ENCODE measurements at regions of chr5 and their contacts with region 1.

Region 1: GRCh38 chr5:108753877-108754276 is 6.2 kb downstream of the FER start:
- DNase-seq: peak; percentile 20
- ATAC-seq: peak; percentile 57
- H3K4me3 Mint-ChIP-seq: no peak overlapping the region
- H3K27ac Mint-ChIP-seq: no peak overlapping the region
- H3K4me1 Mint-ChIP-seq: peaks cover 16% of the 10 kb centered on the region
- H3K27me3 Mint-ChIP-seq: no peaks in the 10 kb centered on the region

Region 2: DNA sequence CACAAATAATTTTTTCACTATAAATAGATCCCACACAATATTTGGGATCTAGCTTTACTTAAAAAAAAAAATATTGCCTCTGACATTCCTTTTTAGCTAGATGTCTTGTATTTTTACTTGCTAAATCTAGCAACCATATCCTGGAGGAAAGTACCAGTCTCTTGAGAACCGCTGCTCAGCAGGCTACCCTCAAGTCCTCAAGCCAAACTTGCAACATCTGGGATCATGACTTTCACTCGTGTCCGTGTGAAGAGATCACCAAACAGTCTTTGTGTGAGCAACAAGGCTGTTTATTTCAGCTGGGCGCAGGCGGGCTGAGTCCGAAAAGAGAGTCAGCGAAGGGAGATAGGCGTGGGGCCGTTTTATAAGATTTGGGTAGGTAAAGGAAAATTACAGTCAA is 186.4 kb before region 1 on chr5:
- CTCF ChIA-PET with region 1: no interaction called
- POLR2A ChIA-PET with region 1: no interaction called
- intact Hi-C with region 1: no loop called
- DNase-seq: no peak
- ATAC-seq: no peak
- H3K4me3 Mint-ChIP-seq: no peak overlapping the region
- H3K27ac Mint-ChIP-seq: no peak overlapping the region
- H3K4me1 Mint-ChIP-seq: no peaks in the 10 kb centered on the region
- H3K27me3 Mint-ChIP-seq: peaks cover 3% of the 10 kb centered on the region

Region 3: DNA sequence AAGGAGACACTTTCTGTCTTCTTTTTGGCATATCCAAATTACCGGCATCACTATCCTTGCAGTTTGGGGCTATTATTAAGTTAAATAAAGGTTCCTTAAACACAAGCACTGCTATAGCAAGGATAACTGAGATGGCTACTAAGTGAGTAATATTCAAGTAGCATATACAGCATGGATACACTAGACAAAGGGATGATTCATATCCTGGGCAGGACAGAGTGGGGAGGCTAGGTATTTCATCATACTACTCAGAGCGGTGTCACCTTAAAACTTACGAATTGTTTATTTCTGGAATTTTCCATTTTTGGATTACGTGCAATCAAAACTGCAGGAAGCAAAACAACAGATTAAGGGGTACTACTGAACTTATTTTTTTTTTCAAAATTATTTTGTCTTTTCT is 47.9 kb after region 1 on chr5:
- CTCF ChIA-PET with region 1: no interaction called
- POLR2A ChIA-PET with region 1: no interaction called
- intact Hi-C with region 1: loop called in 1 of 2 experiments (anchors 5 kb)
- DNase-seq: peak; percentile 15
- ATAC-seq: peak; percentile 99
- H3K4me3 Mint-ChIP-seq: no peak overlapping the region
- H3K27ac Mint-ChIP-seq: no peak overlapping the region
- H3K4me1 Mint-ChIP-seq: peaks cover 6% of the 10 kb centered on the region
- H3K27me3 Mint-ChIP-seq: no peaks in the 10 kb centered on the region

Region 4: GRCh38 chr5:108884736-108885135 is 130.9 kb after region 1 on chr5:
- CTCF ChIA-PET with region 1: no interaction called
- POLR2A ChIA-PET with region 1: no interaction called
- intact Hi-C with region 1: no loop called
- DNase-seq: no peak
- ATAC-seq: no peak
- H3K4me3 Mint-ChIP-seq: no peak overlapping the region
- H3K27ac Mint-ChIP-seq: no peak overlapping the region
- H3K4me1 Mint-ChIP-seq: no peaks in the 10 kb centered on the region
- H3K27me3 Mint-ChIP-seq: no peaks in the 10 kb centered on the region